ENCODE measurements at regions of chr4 and their contacts with region 1.

Region 1: GRCh38 chr4:125254106-125254505 is 60.6 kb upstream of the FAT4 start:
- DNase-seq: no peak
- ATAC-seq: no peak
- H3K4me3 ChIP-seq: no peak overlapping the region
- H3K4me3 Mint-ChIP-seq: no peak overlapping the region
- H3K27ac ChIP-seq: no peak overlapping the region
- H3K27ac Mint-ChIP-seq: no peak overlapping the region
- H3K4me1 ChIP-seq: no peaks in the 10 kb centered on the region
- H3K4me1 Mint-ChIP-seq: no peaks in the 10 kb centered on the region
- H3K27me3 ChIP-seq: no peaks in the 10 kb centered on the region
- H3K27me3 Mint-ChIP-seq: no peaks in the 10 kb centered on the region
- CTCF ChIP-seq: no peak

Region 2: GRCh38 chr4:124177647-124178425 is 1076.3 kb before region 1 on chr4:
- CTCF ChIA-PET with region 1: no interaction called
- POLR2A ChIA-PET with region 1: no interaction called
- intact Hi-C with region 1: no loop called
- DNase-seq: no peak
- ATAC-seq: no peak
- H3K4me3 ChIP-seq: no peak overlapping the region
- H3K4me3 Mint-ChIP-seq: no peak overlapping the region
- H3K27ac ChIP-seq: no peak overlapping the region
- H3K27ac Mint-ChIP-seq: no peak overlapping the region
- H3K4me1 ChIP-seq: no peaks in the 10 kb centered on the region
- H3K4me1 Mint-ChIP-seq: no peaks in the 10 kb centered on the region
- H3K27me3 ChIP-seq: no peaks in the 10 kb centered on the region
- H3K27me3 Mint-ChIP-seq: no peaks in the 10 kb centered on the region
- CTCF ChIP-seq: no peak

Region 3: GRCh38 chr4:125314676-125315575 is 60.8 kb after region 1 on chr4 and contains the start of gene FAT4:
- CTCF ChIA-PET with region 1: no interaction called
- POLR2A ChIA-PET with region 1: no interaction called
- intact Hi-C with region 1: no loop called
- DNase-seq: peak in 7 of 9 experiments; percentile 17 to 60 (median 42)
- ATAC-seq: peak; percentile 61
- H3K4me3 ChIP-seq: peak within 1 kb of the TSS; percentile 50 to 58
- H3K4me3 Mint-ChIP-seq: peak within 1 kb of the TSS; percentile 80
- H3K27ac ChIP-seq: no peak within 1 kb of the TSS
- H3K27ac Mint-ChIP-seq: no peak within 1 kb of the TSS
- H3K4me1 ChIP-seq: peaks cover 27% of the 10 kb centered on the region
- H3K4me1 Mint-ChIP-seq: peaks cover 37% of the 10 kb centered on the region
- H3K27me3 ChIP-seq: peaks cover 18 to 30% of the 10 kb centered on the region in 2 experiments
- H3K27me3 Mint-ChIP-seq: peaks cover 66% of the 10 kb centered on the region
- CTCF ChIP-seq: no peak
- total RNA-seq, gene FAT4: not detected

Region 4: DNA sequence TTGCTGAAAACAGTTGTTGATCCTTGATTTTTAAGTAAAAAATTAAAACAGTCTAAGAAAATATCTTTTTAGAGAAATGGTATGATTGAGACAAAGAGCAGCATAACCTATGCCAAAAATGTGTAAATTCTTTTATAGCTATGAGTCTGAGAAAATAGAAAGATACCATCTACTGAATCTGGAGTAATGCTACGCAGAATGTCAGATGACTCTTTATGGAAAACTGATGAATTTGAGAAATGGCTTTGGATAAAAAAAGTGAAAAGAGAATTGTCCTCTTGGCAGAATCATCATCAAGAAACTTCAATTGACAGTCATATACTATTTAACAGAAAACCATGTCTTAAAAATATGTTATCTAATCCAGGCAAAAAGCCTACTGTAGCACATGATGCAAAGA is 243.8 kb after region 1 on chr4:
- CTCF ChIA-PET with region 1: no interaction called
- POLR2A ChIA-PET with region 1: no interaction called
- intact Hi-C with region 1: loop called in 1 of 2 experiments (anchors 5 kb)
- DNase-seq: no peak
- ATAC-seq: no peak
- H3K4me3 ChIP-seq: no peak overlapping the region
- H3K4me3 Mint-ChIP-seq: no peak overlapping the region
- H3K27ac ChIP-seq: no peak overlapping the region
- H3K27ac Mint-ChIP-seq: no peak overlapping the region
- H3K4me1 ChIP-seq: no peaks in the 10 kb centered on the region
- H3K4me1 Mint-ChIP-seq: no peaks in the 10 kb centered on the region
- H3K27me3 ChIP-seq: no peaks in the 10 kb centered on the region
- H3K27me3 Mint-ChIP-seq: no peaks in the 10 kb centered on the region
- CTCF ChIP-seq: no peak

Measured in CD8-positive, alpha-beta T cell (primary cell).